Activated CD4-positive, alpha-beta T cell treated with anti-CD3 and anti-CD28 coated beads, Interleukin-2, amount 10 ng/mL, durations not matched to agents 24 days and 14 days (primary cell): ENCODE measurements at regions of chr2 and their contacts with region 1.

Region 1: DNA sequence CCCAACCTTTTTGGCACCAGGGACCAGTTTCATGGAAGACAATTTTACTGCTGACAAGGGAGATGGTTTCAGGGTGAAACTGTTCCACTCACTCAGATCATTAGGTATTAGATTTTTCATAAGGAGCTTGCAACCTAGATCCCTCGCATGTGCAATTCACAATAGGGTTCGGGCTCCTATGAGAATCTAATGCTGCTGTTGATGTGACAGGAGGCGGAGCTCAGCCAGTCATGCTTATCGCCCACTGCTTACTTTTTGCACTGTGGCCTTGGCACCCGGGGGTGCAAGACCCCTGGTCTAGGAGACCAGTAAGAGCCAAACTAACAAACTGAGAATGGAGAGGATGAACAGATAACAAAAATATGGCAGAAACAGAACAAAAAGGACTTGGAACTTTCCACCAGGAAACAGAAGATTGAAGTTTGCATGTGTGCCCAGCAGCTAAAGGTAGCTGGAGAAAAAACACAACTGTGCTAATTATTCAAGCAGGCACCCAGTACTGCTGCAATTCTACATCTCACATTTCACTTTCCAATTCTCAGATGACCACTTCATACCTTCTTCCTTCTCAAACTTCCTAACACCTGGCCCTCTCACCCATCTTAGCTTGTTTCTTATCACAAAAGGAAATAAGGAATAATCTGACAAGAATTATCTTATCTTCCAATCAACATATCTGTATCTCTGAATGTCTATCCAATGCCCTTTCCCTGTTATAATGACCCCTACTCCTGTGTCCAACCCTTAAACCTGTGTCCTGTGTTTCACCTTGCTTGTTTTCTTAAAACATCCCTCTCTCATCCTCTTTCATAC is 24.8 kb downstream of the SP3 start:
- DNase-seq: no peak
- H3K4me3 Mint-ChIP-seq: peak overlapping the region; percentile 6
- H3K27ac Mint-ChIP-seq: peak overlapping the region; percentile 76
- H3K4me1 Mint-ChIP-seq: peaks cover 51% of the 10 kb centered on the region
- H3K27me3 Mint-ChIP-seq: no peaks in the 10 kb centered on the region

Region 2: DNA sequence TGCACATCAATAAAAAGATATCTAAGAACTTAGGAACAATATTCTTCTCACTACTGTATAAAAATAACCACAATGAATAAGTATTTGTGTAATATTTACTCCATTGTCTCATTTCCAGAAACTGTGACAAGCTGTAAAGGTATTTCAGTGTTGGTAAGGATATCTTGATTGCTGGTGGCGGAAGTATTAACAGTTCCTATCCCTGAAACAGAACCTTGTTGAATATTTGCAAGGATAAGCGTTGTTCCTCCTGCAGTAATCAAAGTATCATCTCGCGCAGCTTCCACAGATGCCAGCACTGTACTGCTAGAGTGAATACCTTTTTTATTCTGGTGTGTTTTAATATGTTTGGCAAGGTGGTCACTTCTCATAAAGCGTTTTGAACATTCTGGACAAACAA is 30.6 kb before region 1 on chr2:
- intact Hi-C with region 1: loop called (anchors 5 kb)
- DNase-seq: no peak
- H3K4me3 Mint-ChIP-seq: no peak overlapping the region
- H3K27ac Mint-ChIP-seq: no peak overlapping the region
- H3K4me1 Mint-ChIP-seq: peaks cover 17% of the 10 kb centered on the region
- H3K27me3 Mint-ChIP-seq: no peaks in the 10 kb centered on the region

Region 3: GRCh38 chr2:173924285-173924684 is 16.1 kb before region 1 on chr2:
- intact Hi-C with region 1: loop called (anchors 2 kb)
- DNase-seq: no peak
- H3K4me3 Mint-ChIP-seq: no peak overlapping the region
- H3K27ac Mint-ChIP-seq: no peak overlapping the region
- H3K4me1 Mint-ChIP-seq: peaks cover 35% of the 10 kb centered on the region
- H3K27me3 Mint-ChIP-seq: no peaks in the 10 kb centered on the region